ENCODE measurements at regions of chr11 and their contacts with region 1.

Region 1: DNA sequence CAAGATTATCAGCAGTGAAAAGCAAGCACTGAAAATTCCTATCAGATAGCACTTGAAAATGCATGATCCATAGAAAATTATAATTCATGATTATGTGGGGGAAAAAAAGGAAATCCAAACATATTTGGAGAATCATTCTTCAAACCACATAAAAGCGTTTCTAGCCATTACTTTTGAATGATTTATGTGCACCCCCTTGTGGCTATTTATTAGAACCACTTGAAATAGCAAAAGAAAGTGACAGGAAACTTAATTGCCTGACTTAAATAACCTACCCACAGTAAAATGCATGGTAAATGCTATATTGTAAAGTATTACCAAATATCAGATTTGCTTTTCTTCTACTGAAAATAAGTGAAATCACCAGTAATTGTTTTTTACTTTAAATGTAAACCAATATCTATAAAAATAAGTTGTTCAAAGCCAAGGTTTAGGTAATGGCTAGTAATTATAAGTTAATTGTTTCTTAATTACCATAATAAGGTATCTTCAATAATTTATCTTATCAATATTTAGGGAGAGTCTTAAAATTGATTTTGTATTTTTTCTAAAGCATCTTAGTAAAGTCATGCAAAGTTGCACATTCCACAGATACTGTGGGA is 168.5 kb downstream of the ARHGAP42 start:
- DNase-seq: no peak
- ATAC-seq: no peak
- H3K4me3 ChIP-seq: no peak overlapping the region
- H3K27ac ChIP-seq: no peak overlapping the region
- H3K4me1 ChIP-seq: peaks cover 1% of the 10 kb centered on the region
- H3K27me3 ChIP-seq: no peaks in the 10 kb centered on the region

Region 2: GRCh38 chr11:100575870-100576705 is 279.5 kb before region 1 on chr11:
- intact Hi-C with region 1: loop called (anchors 5 kb)
- DNase-seq: no peak
- ATAC-seq: peak; percentile 63 to 79
- H3K4me3 ChIP-seq: no peak overlapping the region
- H3K27ac ChIP-seq: no peak overlapping the region
- H3K4me1 ChIP-seq: no peaks in the 10 kb centered on the region
- H3K27me3 ChIP-seq: no peaks in the 10 kb centered on the region

Region 3: DNA sequence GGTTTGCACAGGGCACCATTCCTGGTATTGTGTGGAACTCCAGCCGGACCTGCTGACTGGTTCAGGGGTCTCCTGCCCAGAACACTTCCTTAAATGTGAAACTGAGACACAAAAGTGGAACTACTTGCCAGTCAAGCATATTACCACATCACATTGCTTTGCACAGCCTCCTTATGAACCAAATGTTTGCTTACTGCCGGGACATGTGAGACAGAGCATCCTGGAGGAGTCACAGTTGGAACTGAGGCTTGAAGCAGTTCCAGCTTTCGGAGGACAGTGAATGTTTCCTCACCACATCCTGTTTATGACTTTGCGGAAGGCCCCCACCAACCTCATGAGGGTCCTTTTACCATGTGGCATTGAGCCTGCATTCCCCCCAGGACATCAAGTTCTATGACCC is 274.2 kb before region 1 on chr11:
- intact Hi-C with region 1: loop called (anchors 5 kb)
- DNase-seq: no peak
- ATAC-seq: peak in 1 of 2 donors; percentile 25
- H3K4me3 ChIP-seq: no peak overlapping the region
- H3K27ac ChIP-seq: no peak overlapping the region
- H3K4me1 ChIP-seq: peaks cover 5% of the 10 kb centered on the region
- H3K27me3 ChIP-seq: no peaks in the 10 kb centered on the region

Region 4: GRCh38 chr11:100681064-100681502 is 174.5 kb before region 1 on chr11:
- intact Hi-C with region 1: loop called (anchors 2 to 5 kb)
- DNase-seq: peak; percentile 49 to 73 (median 65)
- ATAC-seq: peak; percentile 54 to 70
- H3K4me3 ChIP-seq: no peak overlapping the region
- H3K27ac ChIP-seq: no peak overlapping the region
- H3K4me1 ChIP-seq: peaks cover 2% of the 10 kb centered on the region
- H3K27me3 ChIP-seq: no peaks in the 10 kb centered on the region

Region 5: GRCh38 chr11:100687630-100688395 is 167.8 kb before region 1 on chr11:
- intact Hi-C with region 1: loop called (anchors 2 to 5 kb)
- DNase-seq: peak in 2 of 3 donors; percentile 59 to 69
- ATAC-seq: peak; percentile 76 to 80
- H3K4me3 ChIP-seq: peak overlapping the region; percentile 78
- H3K27ac ChIP-seq: peak overlapping the region; percentile 70
- H3K4me1 ChIP-seq: peaks cover 2% of the 10 kb centered on the region
- H3K27me3 ChIP-seq: no peaks in the 10 kb centered on the region

Region 6: DNA sequence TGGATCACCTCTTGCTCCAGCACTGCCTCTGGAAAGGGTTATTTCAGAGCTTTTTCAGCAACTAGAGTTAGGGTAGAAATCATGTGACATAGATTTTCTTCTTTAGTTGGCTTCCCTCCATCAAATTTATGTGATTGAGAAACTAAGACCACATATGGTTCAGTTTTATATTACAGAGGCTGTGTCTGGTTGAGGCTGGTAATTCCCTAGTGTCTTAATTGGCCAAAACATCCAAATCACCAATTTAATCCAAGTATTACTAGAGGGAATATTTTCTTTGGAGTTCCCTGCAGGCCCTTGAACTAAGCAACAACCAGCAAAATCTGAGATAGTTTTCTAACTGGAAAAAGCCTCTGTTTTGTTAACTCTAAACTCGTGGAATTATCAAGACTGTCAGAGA is 32.2 kb before region 1 on chr11:
- intact Hi-C with region 1: no loop called
- DNase-seq: no peak
- ATAC-seq: peak; percentile 58 to 88
- H3K4me3 ChIP-seq: no peak overlapping the region
- H3K27ac ChIP-seq: no peak overlapping the region
- H3K4me1 ChIP-seq: peaks cover 4% of the 10 kb centered on the region
- H3K27me3 ChIP-seq: no peaks in the 10 kb centered on the region

Region 7: GRCh38 chr11:100930185-100930778 is 74.7 kb after region 1 on chr11:
- intact Hi-C with region 1: loop called in 2 of 4 experiments (anchors 5 to 10 kb)
- DNase-seq: no peak
- ATAC-seq: peak in 1 of 2 donors; percentile 51
- H3K4me3 ChIP-seq: no peak overlapping the region
- H3K27ac ChIP-seq: no peak overlapping the region
- H3K4me1 ChIP-seq: no peaks in the 10 kb centered on the region
- H3K27me3 ChIP-seq: no peaks in the 10 kb centered on the region

Measured in right cardiac atrium (tissue), 5 donors.